ENCODE measurements at regions of chr6 and their contacts with region 1.

Region 1: GRCh38 chr6:42217519-42218367 is at the start of gene MRPS10:
- DNase-seq: peak; percentile 57
- H3K4me3 ChIP-seq: peak within 1 kb of the TSS; percentile 83
- H3K27me3 ChIP-seq: no peaks in the 10 kb centered on the region
- CTCF ChIP-seq: no peak
- polyA plus RNA-seq, gene MRPS10: 26.4 and 43.3 TPM in 2 replicates

Region 2: DNA sequence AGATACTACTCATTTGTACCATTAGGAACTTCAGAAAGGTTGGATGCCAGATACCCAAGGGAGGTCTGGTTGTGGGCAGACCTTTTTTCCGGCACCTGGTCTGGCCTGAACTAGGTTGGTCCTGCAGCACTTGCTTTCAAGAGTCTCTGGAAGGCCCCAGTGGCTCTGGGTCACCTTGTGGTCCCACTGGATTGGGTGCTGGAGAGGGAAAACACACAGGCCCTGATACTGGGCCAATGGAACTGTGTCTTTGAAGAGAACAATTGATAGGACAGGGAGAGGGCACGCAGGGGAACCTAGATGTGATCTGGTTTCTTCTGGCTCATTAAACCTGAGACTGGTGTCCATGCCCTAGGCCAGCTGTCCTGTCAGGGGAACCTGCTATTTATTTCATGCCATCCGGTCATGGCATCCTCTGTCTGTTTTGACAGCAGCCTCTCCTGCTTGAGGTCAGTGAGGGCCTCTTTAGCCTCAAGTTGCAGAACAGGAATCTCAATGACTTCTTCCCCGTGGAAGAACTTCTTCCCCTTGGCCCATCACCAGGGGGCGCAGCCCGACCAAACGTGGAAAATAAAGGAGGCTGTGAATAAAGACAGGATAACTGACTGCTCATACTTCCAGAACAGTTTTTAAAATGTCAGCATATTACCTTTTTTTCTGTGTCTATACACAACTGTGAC is 142.4 kb before region 1 on chr6:
- CTCF ChIA-PET with region 1: interaction called, 19 read pairs
- POLR2A ChIA-PET with region 1: no interaction called
- DNase-seq: peak; percentile 21
- H3K4me3 ChIP-seq: no peak overlapping the region
- H3K27me3 ChIP-seq: no peaks in the 10 kb centered on the region
- CTCF ChIP-seq: peak; percentile 94

Region 3: DNA sequence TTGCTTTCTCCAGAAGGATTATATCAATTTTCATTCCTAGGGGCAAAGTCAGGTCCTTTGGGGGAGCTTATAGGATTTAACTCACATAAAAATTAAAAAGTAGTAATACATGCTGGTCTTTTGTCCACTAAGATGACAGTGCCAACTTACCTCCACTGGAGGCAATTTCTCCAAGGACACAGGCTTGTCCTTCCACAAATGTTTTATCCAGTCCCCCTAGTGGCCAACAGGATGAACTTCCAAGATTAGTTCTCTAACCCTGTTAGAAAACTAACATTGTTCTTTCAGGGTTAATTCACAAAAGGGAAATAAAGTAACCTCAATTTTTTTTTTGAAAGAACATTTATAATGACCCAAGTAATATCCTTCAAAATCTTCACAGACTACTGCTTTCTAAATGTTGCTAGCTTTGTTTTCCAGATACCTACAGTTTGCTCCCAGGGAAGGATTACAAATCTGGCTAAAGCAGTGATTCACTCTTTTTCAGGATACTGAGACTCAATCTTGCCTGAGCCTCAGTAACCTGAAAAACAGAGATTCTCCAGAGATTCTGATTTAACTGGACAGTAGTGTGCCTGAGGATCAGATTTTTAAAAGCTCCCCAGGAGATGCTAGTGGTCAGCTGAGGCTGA is 314.4 kb after region 1 on chr6:
- CTCF ChIA-PET with region 1: interaction called, 12 read pairs
- POLR2A ChIA-PET with region 1: no interaction called
- DNase-seq: no peak
- H3K4me3 ChIP-seq: no peak overlapping the region
- H3K27me3 ChIP-seq: no peaks in the 10 kb centered on the region
- CTCF ChIP-seq: peak; percentile 79

Measured in BJ (cell line).